Activated B cell treated with CpG ODN at 0.5 μM for 24 hours (primary cell): ENCODE measurements at regions of chr18 and their contacts with region 1.

Region 1: DNA sequence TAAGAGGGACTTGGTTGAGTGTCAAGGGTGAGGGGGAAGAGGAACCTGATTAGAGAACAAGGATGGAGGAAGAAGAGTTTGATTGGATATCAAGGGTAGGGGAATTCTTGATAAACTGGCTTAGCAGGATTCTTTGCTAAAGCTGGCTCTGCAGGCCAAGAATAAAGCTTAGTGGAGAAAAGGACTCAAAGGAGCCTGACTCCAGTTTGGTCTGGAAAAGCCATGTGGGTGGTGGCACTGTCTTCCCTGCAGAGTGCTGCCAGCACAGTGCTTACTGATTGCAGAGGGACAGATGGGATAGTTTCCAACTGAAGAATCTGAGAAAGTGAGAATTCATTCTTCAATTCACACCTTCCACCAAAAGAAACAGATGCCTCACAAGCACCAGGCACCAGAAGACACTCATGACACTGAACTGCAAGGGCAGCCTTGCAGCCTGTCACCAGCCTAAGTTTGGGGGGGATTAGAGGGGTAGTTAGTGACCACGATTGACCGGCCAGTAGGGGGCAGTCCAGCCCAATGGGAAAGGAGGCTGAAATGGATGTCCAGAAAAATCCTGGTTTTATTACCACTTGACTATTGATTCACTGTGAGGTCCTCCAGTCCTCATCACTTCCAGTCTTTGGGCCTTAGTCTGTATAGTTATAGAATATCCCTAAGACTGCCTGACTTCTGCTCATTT is 334.5 kb downstream of the SMAD2 start:
- DNase-seq: peak; percentile 28
- ATAC-seq: no peak
- H3K4me3 Mint-ChIP-seq: no peak overlapping the region
- H3K27ac Mint-ChIP-seq: no peak overlapping the region
- H3K4me1 Mint-ChIP-seq: no peaks in the 10 kb centered on the region
- H3K27me3 Mint-ChIP-seq: peaks cover 30% of the 10 kb centered on the region
- CTCF ChIP-seq: no peak

Region 2: GRCh38 chr18:47100214-47100831 is 495.6 kb before region 1 on chr18:
- CTCF ChIA-PET with region 1: no interaction called
- POLR2A ChIA-PET with region 1: no interaction called
- intact Hi-C with region 1: loop called (anchors 1 kb)
- DNase-seq: peak; percentile 24
- ATAC-seq: peak; percentile 42
- H3K4me3 Mint-ChIP-seq: no peak overlapping the region
- H3K27ac Mint-ChIP-seq: no peak overlapping the region
- H3K4me1 Mint-ChIP-seq: no peaks in the 10 kb centered on the region
- H3K27me3 Mint-ChIP-seq: no peaks in the 10 kb centered on the region
- CTCF ChIP-seq: peak; percentile 85